Cardiac septum (tissue), 1 donor: ENCODE measurements at regions of chr2 and their contacts with region 1.

Region 1: GRCh38 chr2:234951664-234952269 is at the start of gene SH3BP4:
- DNase-seq: peak; percentile 90
- total RNA-seq, gene SH3BP4: 9.1 TPM

Region 2: GRCh38 chr2:234679741-234680687 is 271.8 kb before region 1 on chr2:
- intact Hi-C with region 1: loop called (anchors 10 kb)
- DNase-seq: peak; percentile 83

Region 3: GRCh38 chr2:234881413-234882241 is 70.1 kb before region 1 on chr2:
- intact Hi-C with region 1: loop called (anchors 5 kb)
- DNase-seq: peak; percentile 85

Region 4: GRCh38 chr2:234940527-234940926 is 11.2 kb before region 1 on chr2:
- intact Hi-C with region 1: no loop called
- DNase-seq: no peak

Region 5: GRCh38 chr2:234970467-234970866 is 18.7 kb after region 1 on chr2:
- intact Hi-C with region 1: no loop called
- DNase-seq: no peak

Region 6: DNA sequence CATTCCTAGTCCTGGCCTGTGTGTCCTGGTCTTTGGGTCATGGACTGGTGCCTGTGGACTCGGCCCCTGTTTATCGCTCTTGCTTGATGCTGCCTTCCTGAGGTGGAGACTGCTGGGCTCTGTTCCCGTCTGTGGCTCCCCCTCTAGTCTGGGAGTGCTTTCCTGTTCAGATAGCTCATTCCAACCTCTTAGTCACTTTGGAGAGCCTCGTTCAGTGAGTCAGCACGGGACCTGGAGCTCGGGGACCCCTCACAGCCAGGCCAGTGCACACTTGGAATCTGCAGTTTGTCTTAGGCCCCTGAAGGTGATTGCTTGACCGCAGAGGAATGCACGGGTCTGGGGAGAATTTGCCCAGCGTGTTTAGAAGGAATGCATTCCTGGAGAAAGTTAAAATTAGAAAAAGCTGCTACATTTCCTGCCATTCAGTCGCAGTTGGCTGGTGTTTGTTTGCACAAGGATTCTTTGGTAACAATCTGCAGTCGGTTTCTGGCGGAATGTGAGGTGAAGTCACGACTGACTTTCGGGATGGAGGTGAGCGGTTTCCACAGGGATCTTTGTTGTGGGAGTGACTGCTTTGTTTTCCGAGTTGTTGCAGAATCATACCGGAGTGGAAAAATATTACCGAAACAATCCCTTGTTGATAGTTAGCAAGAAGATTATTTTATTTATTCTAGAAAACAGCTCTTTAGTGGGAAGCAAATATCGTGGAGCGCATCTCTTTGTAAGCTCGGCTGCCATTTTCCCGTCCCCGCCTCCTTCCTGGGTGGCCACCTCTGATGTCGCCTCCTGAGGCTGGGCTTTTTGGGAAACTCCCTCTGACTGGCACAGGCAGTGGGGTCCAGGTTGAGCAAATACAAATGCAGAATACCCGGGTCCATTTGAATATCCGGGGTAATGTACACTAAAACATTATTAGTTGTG is 29.7 kb after region 1 on chr2:
- intact Hi-C with region 1: loop called (anchors 2 kb)
- DNase-seq: peak; percentile 85